A673 (cell line): ENCODE measurements at regions of chr2 and their contacts with region 1.

Region 1: DNA sequence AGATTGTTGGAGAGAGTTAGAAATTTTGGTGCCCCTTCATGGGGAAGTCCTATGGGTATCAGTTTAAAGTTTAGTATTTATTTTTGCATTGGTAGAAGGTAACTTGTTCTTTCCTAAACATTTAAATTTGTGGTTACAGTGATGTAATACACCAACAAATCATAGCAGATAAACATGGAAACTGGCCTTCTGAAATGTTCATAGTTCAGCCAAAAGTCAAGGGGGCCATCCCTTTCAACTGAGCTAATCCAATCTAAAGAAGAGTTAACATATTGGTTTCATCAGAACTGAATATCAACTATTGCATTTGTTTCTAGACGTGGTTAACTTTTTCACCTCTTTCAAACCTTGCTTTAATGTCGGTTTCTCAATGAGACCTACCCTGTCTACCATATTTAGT is 46.3 kb downstream of the PPP1R1C start:
- DNase-seq: no peak
- H3K4me3 ChIP-seq: no peak overlapping the region
- H3K27ac ChIP-seq: no peak overlapping the region
- H3K4me1 ChIP-seq: no peaks in the 10 kb centered on the region
- H3K27me3 ChIP-seq: no peaks in the 10 kb centered on the region
- CTCF ChIP-seq: no peak

Region 2: GRCh38 chr2:181991171-181991885 is 40.6 kb before region 1 on chr2:
- CTCF ChIA-PET with region 1: no interaction called
- POLR2A ChIA-PET with region 1: interaction called, 12 read pairs
- intact Hi-C with region 1: no loop called
- DNase-seq: no peak
- H3K4me3 ChIP-seq: no peak overlapping the region
- H3K27ac ChIP-seq: no peak overlapping the region
- H3K4me1 ChIP-seq: no peaks in the 10 kb centered on the region
- H3K27me3 ChIP-seq: no peaks in the 10 kb centered on the region
- CTCF ChIP-seq: no peak